Prostate gland (tissue), 2 donors: ENCODE measurements at regions of chr2 and their contacts with region 1.

Region 1: DNA sequence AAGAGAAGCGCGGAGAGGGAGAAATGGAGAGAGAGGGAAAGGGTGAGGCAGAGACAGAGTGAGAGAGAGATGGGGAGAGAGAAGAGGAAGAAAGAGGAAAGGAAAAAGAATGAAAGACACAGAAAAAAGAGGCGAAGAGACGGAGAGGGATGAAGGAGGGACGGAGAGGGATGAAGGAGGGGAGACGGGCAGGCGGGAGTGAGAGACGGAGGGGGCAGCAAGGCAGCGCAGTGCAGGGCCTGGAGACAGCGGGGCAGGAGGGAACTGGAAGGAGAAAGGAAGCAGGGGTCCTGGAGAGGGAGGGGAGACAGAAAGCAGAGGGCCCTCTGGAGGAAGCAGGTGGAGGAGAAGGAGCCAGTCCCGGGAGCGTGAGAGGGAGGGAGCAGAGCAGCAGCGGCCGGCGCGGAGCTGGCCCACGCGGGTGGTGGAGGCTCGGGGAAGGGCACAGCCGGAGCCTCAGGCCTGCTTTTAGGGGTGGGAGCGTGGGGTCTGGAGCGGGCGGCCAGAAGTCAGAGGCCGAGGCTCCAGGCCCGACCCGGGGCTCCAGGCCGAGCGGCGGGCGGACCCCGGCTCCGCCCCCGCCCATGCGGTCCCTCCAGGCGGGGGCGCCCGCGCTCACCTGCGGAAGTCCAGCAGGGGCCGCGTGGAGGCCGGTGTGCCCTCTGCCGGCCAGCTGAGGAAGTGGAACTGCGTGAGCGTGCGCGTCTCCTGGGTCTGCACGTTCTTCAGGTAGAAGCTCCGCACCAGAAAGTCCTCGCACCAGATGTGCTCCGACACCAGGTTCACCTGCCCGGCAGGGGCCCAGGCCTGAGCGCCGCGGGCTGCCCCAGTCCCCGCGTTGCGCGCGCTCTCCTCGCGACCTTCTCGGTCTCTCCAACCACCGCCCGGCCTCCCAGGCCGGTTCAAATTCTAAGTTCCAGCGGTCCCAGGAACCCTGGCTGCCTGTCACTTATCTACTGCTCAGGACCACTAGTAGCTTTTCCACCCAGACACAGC is 14.5 kb downstream of the PTPRN start:
- DNase-seq: peak; percentile 86
- H3K4me3 ChIP-seq: peak overlapping the region; percentile 39 to 48
- H3K27ac ChIP-seq: peak overlapping the region; percentile 76 to 81
- H3K4me1 ChIP-seq: no peaks in the 10 kb centered on the region
- H3K27me3 ChIP-seq: no peaks in the 10 kb centered on the region
- CTCF ChIP-seq: peak; percentile 99 to 100 (median 100)
- POLR2A ChIP-seq: peak; percentile 26

Region 2: GRCh38 chr2:219104107-219105035 is 190.3 kb before region 1 on chr2:
- intact Hi-C with region 1: no loop called
- DNase-seq: no peak
- H3K4me3 ChIP-seq: no peak overlapping the region
- H3K27ac ChIP-seq: no peak overlapping the region
- H3K4me1 ChIP-seq: no peaks in the 10 kb centered on the region
- H3K27me3 ChIP-seq: no peaks in the 10 kb centered on the region
- CTCF ChIP-seq: peak in 3 of 4 experiments; percentile 31 to 53 (median 47)
- POLR2A ChIP-seq: no peak

Region 3: DNA sequence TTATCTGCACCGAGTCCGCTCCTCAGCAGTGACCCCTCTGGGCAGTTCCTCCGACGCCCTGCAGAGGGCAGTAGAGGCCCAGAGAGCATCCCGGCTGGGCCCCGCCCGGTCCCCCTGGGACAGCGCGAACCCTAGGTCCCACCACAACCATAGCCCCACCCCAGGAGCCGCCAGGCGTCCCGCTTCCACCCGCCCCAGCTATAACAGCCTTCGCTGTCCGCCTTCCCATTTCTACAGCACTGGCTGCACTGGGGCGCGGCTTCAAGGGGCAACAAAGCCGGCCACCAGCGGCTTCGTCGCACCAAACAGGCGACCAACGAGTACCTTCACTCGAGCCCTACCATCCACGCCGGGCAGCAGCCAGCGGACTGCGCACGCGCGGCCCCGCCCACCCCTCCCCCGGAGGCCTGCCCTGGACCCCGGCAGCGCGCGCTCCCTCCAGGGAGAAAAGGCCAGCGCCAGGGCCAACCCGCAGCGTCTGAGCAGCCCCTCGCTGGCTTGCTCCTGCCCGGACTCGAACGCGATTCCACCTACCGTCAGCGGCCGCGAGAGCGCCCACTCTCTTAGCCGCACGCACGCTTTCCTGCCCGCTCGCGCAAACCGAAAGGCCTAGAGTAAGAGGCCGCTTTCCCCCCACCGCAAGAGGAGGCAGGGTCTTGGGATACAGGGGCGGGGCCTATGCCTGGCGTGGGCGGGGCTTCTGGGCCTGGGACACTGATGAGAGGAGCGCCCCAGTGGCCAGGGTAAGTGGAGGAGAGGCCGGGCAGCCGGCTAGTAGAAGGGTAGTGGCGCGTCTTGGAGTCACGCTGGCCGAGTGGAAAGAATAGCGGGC is 134.3 kb before region 1 on chr2 and contains the start of gene NHEJ1:
- intact Hi-C with region 1: loop called (anchors 2 kb)
- DNase-seq: peak; percentile 95
- H3K4me3 ChIP-seq: peak within 1 kb of the TSS; percentile 70 to 77
- H3K27ac ChIP-seq: peak within 1 kb of the TSS; percentile 97 to 98
- H3K4me1 ChIP-seq: no peaks in the 10 kb centered on the region
- H3K27me3 ChIP-seq: no peaks in the 10 kb centered on the region
- CTCF ChIP-seq: peak; percentile 98 to 99 (median 98)
- POLR2A ChIP-seq: peak; percentile 66
- total RNA-seq, gene NHEJ1: 15.2 to 16.9 TPM

Region 4: GRCh38 chr2:219218732-219219701 is 75.6 kb before region 1 on chr2 and contains the start of gene ABCB6:
- intact Hi-C with region 1: loop called (anchors 10 kb)
- DNase-seq: peak; percentile 96
- H3K4me3 ChIP-seq: peak within 1 kb of the TSS; percentile 42 to 46
- H3K27ac ChIP-seq: peak within 1 kb of the TSS; percentile 88 to 89
- H3K4me1 ChIP-seq: peaks cover 22% of the 10 kb centered on the region
- H3K27me3 ChIP-seq: no peaks in the 10 kb centered on the region
- CTCF ChIP-seq: no peak
- POLR2A ChIP-seq: peak; percentile 92
- total RNA-seq, gene ABCB6: 31.9 to 32.1 TPM

Region 5: GRCh38 chr2:219278655-219279516 is 15.8 kb before region 1 on chr2 and contains the start of gene DNAJB2:
- intact Hi-C with region 1: loop called (anchors 2 kb)
- DNase-seq: peak; percentile 99
- H3K4me3 ChIP-seq: peak within 1 kb of the TSS; percentile 64 to 77
- H3K27ac ChIP-seq: peak within 1 kb of the TSS; percentile 94 to 98
- H3K4me1 ChIP-seq: peaks cover 13% of the 10 kb centered on the region
- H3K27me3 ChIP-seq: no peaks in the 10 kb centered on the region
- CTCF ChIP-seq: peak in 1 of 4 experiments; percentile 21
- POLR2A ChIP-seq: peak; percentile 95
- total RNA-seq, gene DNAJB2: 155 to 163 TPM

Region 6: DNA sequence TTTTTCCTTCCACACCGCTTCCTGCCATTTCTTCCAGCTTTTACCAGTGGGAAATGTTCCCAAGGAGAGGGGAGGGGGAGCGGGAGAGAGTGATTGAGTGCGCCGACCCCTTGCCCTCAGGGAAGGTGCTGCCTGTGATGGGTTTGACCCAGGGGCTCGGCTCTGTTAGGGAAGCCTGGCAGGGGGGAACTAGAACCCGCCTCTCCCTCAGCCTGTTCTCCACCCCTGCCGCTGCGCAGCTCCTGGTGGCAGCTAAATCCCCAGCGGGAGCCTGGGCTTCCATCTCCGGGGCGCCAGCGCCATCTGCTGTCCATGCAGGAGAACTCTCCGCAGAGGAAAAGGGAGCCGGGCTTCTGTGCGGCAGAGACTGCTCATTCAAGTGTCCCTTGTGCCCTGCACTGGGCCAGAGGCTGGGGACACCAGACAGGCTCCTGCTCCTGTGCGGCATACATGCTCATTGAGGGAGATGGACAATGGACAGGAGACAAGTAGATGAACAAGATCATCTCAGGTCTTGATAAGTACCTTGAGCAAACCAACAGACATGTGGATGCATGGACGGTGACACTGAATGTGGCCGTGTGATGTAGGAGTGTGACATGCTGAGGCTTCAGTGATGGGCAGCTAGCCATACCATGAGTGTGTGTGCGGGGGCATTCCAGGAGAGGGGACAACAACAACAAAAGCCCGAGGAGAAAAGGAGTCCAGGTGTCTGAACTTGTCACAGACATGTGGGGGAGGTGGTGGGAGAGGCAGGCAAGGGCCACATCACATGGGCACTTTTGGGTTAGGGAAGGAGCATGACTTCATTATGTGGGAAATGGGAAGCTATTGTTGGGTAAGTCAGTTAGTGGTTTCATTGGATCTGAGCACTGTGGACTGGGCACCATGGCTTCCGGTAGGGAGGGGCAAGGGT is 235.7 kb after region 1 on chr2:
- intact Hi-C with region 1: loop called (anchors 10 kb)
- DNase-seq: peak; percentile 74
- H3K4me3 ChIP-seq: no peak overlapping the region
- H3K27ac ChIP-seq: no peak overlapping the region
- H3K4me1 ChIP-seq: no peaks in the 10 kb centered on the region
- H3K27me3 ChIP-seq: no peaks in the 10 kb centered on the region
- CTCF ChIP-seq: peak; percentile 90 to 100 (median 97)
- POLR2A ChIP-seq: no peak